ENCODE measurements at regions of chr3 and their contacts with region 1.

Region 1: GRCh38 chr3:143951351-143951971 is 20.2 kb upstream of the DIPK2A start:
- DNase-seq: no peak
- ATAC-seq: peak; percentile 62
- H3K4me3 Mint-ChIP-seq: no peak overlapping the region
- H3K27ac Mint-ChIP-seq: no peak overlapping the region
- H3K4me1 Mint-ChIP-seq: peaks cover 2% of the 10 kb centered on the region
- H3K27me3 Mint-ChIP-seq: no peaks in the 10 kb centered on the region
- CTCF ChIP-seq: peak; percentile 64

Region 2: GRCh38 chr3:143283432-143284128 is 667.9 kb before region 1 on chr3:
- CTCF ChIA-PET with region 1: no interaction called
- POLR2A ChIA-PET with region 1: no interaction called
- intact Hi-C with region 1: no loop called
- DNase-seq: no peak
- ATAC-seq: no peak
- H3K4me3 Mint-ChIP-seq: no peak overlapping the region
- H3K27ac Mint-ChIP-seq: no peak overlapping the region
- H3K4me1 Mint-ChIP-seq: peaks cover 6% of the 10 kb centered on the region
- H3K27me3 Mint-ChIP-seq: no peaks in the 10 kb centered on the region
- CTCF ChIP-seq: no peak

Region 3: DNA sequence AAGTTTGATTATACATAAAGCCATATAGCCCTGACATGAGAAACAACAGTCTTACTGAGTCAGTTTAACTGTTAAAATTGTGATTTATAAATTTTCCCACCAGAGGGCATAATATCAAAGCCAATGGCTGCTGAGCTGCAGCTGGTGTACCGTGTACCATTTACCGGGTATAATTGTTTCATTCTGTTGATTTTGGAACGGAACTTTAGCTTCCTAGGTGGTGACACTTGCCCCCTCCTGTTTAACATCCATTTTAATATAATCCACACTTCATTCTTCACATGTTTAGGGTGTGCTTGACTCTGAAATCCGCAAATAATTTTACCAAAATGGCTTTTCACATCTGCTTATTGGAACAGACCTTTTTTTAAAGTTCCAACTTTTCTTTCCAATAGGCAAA is 176.0 kb before region 1 on chr3:
- CTCF ChIA-PET with region 1: interaction called, 4 read pairs
- POLR2A ChIA-PET with region 1: no interaction called
- intact Hi-C with region 1: loop called (anchors 1 kb)
- DNase-seq: no peak
- ATAC-seq: peak; percentile 70
- H3K4me3 Mint-ChIP-seq: no peak overlapping the region
- H3K27ac Mint-ChIP-seq: no peak overlapping the region
- H3K4me1 Mint-ChIP-seq: peaks cover 3% of the 10 kb centered on the region
- H3K27me3 Mint-ChIP-seq: no peaks in the 10 kb centered on the region
- CTCF ChIP-seq: no peak

Region 4: GRCh38 chr3:143885780-143886427 is 65.6 kb before region 1 on chr3:
- CTCF ChIA-PET with region 1: interaction called, 15 read pairs
- POLR2A ChIA-PET with region 1: no interaction called
- intact Hi-C with region 1: loop called (anchors 1 kb)
- DNase-seq: no peak
- ATAC-seq: peak; percentile 82
- H3K4me3 Mint-ChIP-seq: no peak overlapping the region
- H3K27ac Mint-ChIP-seq: no peak overlapping the region
- H3K4me1 Mint-ChIP-seq: no peaks in the 10 kb centered on the region
- H3K27me3 Mint-ChIP-seq: peaks cover 2% of the 10 kb centered on the region
- CTCF ChIP-seq: no peak

Region 5: GRCh38 chr3:143895805-143896204 is 55.7 kb before region 1 on chr3:
- CTCF ChIA-PET with region 1: interaction called, 58 read pairs
- POLR2A ChIA-PET with region 1: no interaction called
- intact Hi-C with region 1: loop called (anchors 1 kb)
- DNase-seq: no peak
- ATAC-seq: no peak
- H3K4me3 Mint-ChIP-seq: no peak overlapping the region
- H3K27ac Mint-ChIP-seq: no peak overlapping the region
- H3K4me1 Mint-ChIP-seq: no peaks in the 10 kb centered on the region
- H3K27me3 Mint-ChIP-seq: peaks cover 1% of the 10 kb centered on the region
- CTCF ChIP-seq: peak; percentile 56

Region 6: GRCh38 chr3:143918848-143919247 is 32.6 kb before region 1 on chr3:
- CTCF ChIA-PET with region 1: interaction called, 3 read pairs
- POLR2A ChIA-PET with region 1: no interaction called
- intact Hi-C with region 1: loop called (anchors 5 kb)
- DNase-seq: no peak
- ATAC-seq: no peak
- H3K4me3 Mint-ChIP-seq: no peak overlapping the region
- H3K27ac Mint-ChIP-seq: no peak overlapping the region
- H3K4me1 Mint-ChIP-seq: peaks cover 54% of the 10 kb centered on the region
- H3K27me3 Mint-ChIP-seq: no peaks in the 10 kb centered on the region
- CTCF ChIP-seq: no peak

Region 7: DNA sequence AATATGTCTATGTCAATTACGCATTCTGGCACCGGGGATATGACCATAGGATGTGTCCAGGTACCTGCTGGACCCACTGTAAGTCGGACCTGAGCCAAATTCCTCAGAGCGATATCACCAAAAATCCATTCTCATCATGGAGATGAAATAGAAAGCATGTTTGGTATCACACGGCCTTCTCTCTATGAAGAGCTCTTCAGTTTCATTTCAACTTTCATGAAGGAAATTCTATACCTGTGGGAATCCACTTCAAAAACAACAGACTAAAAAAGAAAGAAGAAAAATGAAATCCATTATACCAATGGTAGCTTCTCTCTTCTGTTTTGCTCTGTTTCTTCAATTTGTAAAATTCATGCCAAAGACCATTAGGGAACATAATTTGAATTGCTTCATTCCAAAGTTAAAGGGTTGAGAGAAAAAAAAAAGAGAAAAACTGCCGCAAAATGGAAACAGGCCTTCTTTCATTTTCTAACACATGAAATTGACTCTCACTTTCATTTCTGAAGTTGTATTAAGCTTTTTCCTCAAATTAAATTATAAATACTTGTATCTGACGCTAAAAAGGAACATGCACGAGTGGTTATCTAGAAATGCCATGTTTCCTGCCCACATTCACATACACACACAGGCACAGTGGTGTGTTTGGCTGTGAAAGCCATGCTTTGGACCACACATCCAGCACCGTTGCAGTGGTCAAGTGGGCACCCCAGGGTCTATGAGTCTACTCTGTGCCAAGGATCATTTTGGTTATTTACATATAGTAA is 26.8 kb before region 1 on chr3:
- CTCF ChIA-PET with region 1: interaction called, 5 read pairs
- POLR2A ChIA-PET with region 1: no interaction called
- intact Hi-C with region 1: loop called (anchors 2 kb)
- DNase-seq: no peak
- ATAC-seq: peak; percentile 69
- H3K4me3 Mint-ChIP-seq: peak overlapping the region; percentile 75
- H3K27ac Mint-ChIP-seq: peak overlapping the region; percentile 91
- H3K4me1 Mint-ChIP-seq: peaks cover 84% of the 10 kb centered on the region
- H3K27me3 Mint-ChIP-seq: no peaks in the 10 kb centered on the region
- CTCF ChIP-seq: no peak